H1 (cell line): ENCODE measurements at regions of chr1 and their contacts with region 1.

Region 1: DNA sequence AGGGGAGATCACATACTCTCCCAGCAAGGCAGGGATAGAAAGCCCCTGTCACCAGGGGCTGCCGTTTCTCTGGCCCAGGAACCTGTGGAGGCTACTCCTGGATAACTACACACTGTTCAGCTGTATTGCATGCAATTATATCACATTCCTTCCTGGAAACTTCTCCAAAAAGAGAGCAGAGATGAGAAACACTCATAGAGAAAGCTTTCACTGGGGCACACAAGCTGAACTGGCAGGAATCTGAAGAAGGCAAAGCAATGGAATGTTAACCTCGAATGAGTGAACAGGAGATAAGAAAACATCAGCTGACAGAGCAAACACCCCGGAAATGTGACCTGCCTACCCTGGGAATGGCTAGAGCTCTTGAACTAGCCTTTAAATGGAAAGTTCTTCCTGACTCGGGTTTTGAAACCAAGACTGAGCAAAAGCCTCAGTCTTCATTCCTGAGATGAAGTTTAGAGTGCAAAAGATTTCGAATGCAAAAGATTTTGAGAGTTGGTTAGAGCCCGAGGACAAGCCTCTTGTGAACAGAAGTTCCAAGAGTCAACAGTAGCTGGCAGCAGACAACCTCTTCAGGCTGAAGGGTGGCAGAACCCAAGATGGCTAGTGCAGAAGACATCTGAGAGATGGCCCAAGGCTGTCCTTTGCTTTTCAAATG is 32.3 kb downstream of the CCN1 start:
- DNase-seq: no peak
- H3K4me3 ChIP-seq: no peak overlapping the region
- H3K27ac ChIP-seq: no peak overlapping the region
- H3K4me1 ChIP-seq: peaks cover under 1 to 10% (median 7%) of the 10 kb centered on the region in 4 experiments; a peak in 5 of 7 replicates
- H3K27me3 ChIP-seq: no peaks in the 10 kb centered on the region; a peak in 1 of 7 replicates
- CTCF ChIP-seq: peak; percentile 21 to 67 (median 62)
- EP300 ChIP-seq: no peak
- POLR2A ChIP-seq: no peak
- RAD21 ChIP-seq: peak; percentile 76 to 84

Region 2: DNA sequence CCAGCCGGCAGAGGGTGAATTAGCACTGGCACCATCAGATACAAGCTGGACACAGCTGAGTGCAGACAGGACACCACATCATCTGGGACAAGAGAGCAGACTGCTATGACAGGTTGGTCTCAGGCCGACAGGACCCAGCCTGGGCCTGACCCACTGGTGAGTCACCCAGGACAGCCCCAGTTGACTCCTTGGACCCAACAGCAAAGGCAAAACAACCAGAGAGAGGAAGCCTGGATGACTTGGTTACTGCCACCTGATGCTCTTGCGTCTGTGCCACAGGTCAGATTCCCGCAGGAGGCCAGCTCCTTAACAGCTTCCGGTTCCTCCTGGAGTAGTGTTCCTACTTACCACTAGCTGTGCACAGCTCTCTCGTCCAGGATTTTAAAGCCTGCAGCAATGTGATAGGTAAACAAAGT is 13.7 kb before region 1 on chr1:
- CTCF ChIA-PET with region 1: interaction called, 12 read pairs
- POLR2A ChIA-PET with region 1: interaction called, 15 read pairs
- DNase-seq: no peak
- H3K4me3 ChIP-seq: no peak overlapping the region
- H3K27ac ChIP-seq: no peak overlapping the region
- H3K4me1 ChIP-seq: peaks cover 2 to 11% (median 6%) of the 10 kb centered on the region in 4 experiments; a peak in 4 of 7 replicates
- H3K27me3 ChIP-seq: peaks cover 0 to 4% (median 1%) of the 10 kb centered on the region in 4 experiments; a peak in 2 of 7 replicates
- CTCF ChIP-seq: no peak
- EP300 ChIP-seq: no peak
- POLR2A ChIP-seq: no peak
- RAD21 ChIP-seq: no peak

Region 3: DNA sequence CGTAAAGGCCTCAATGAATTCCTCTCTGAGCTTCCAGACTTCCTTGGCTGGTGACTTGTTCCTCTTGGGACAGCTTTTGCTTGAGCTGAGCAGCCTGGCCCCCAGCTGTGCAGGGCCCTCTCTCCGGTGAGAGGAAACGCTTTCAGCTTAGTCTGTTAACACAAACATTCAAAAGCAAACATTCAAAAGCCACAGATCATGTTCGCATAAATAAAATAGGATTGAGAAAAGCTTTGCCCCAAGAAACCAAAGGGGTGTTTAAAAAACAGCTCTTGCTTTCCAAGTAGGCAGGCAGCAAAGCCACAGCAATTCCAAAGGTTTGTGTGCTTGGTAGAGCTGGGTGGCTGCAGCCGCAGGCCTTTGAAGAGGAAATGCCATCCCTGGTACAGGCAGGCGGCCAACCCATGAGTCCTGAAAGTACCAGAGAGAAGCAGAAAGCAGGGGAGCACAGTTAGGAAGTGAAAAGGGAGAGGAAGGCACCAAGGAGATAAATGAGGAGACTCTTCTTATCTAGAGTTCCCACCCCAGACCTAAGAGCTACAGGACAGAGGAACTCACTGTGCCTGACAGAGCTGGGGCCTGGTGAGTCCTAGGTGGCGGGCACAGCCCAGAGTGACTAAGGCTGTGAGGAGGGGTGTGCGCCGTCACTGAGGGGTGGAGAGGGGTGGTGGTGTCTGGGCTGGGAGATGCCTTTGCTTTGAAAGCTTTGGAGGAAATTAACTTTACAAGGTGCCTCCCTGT is 16.1 kb after region 1 on chr1:
- CTCF ChIA-PET with region 1: interaction called, 42 read pairs
- POLR2A ChIA-PET with region 1: interaction called, 7 read pairs
- DNase-seq: no peak
- H3K4me3 ChIP-seq: no peak overlapping the region
- H3K27ac ChIP-seq: no peak overlapping the region
- H3K4me1 ChIP-seq: peaks cover 3 to 11% (median 6%) of the 10 kb centered on the region in 4 experiments; a peak in 6 of 7 replicates
- H3K27me3 ChIP-seq: no peaks in the 10 kb centered on the region
- CTCF ChIP-seq: no peak
- EP300 ChIP-seq: no peak
- POLR2A ChIP-seq: no peak
- RAD21 ChIP-seq: no peak